Activated CD4-positive, alpha-beta memory T cell treated with anti-CD3 and anti-CD28 coated beads, Interleukin-2, amount 10 ng/mL, durations not matched to agents 7 days and 5 days (primary cell): ENCODE measurements at regions of chr9 and their contacts with region 1.

Region 1: GRCh38 chr9:76562511-76562911 is 103.5 kb downstream of the GCNT1 start:
- DNase-seq: no peak
- H3K4me3 Mint-ChIP-seq: no peak overlapping the region
- H3K27ac Mint-ChIP-seq: no peak overlapping the region
- H3K4me1 Mint-ChIP-seq: peaks cover 24% of the 10 kb centered on the region
- H3K27me3 Mint-ChIP-seq: peaks cover 2% of the 10 kb centered on the region

Region 2: GRCh38 chr9:76576344-76576743 is 13.8 kb after region 1 on chr9:
- CTCF ChIA-PET with region 1: no interaction called
- POLR2A ChIA-PET with region 1: interaction called, 16 read pairs
- DNase-seq: peak; percentile 85
- H3K4me3 Mint-ChIP-seq: peak overlapping the region; percentile 11
- H3K27ac Mint-ChIP-seq: peak overlapping the region; percentile 90
- H3K4me1 Mint-ChIP-seq: peaks cover 46% of the 10 kb centered on the region
- H3K27me3 Mint-ChIP-seq: peaks cover 2% of the 10 kb centered on the region